ENCODE measurements at regions of chr16 and their contacts with region 1.

Region 1: GRCh38 chr16:48511071-48511540 is 98.9 kb downstream of the N4BP1 start:
- DNase-seq: peak; percentile 96
- H3K4me3 ChIP-seq: no peak overlapping the region
- H3K27ac ChIP-seq: peak overlapping the region; percentile 98
- H3K4me1 ChIP-seq: peaks cover 20% of the 10 kb centered on the region
- H3K27me3 ChIP-seq: no peaks in the 10 kb centered on the region
- CTCF ChIP-seq: peak; percentile 10 to 46

Region 2: GRCh38 chr16:48385272-48386150 is 125.6 kb before region 1 on chr16 and contains the start of gene SIAH1:
- CTCF ChIA-PET with region 1: no interaction called
- dilution Hi-C with region 1: no loop called
- in situ Hi-C with region 1: no loop called
- intact Hi-C with region 1: loop called (anchors 5 kb)
- DNase-seq: peak; percentile 77
- H3K4me3 ChIP-seq: peak within 1 kb of the TSS; percentile 90 to 95 (median 92)
- H3K27ac ChIP-seq: peak within 1 kb of the TSS; percentile 88
- H3K4me1 ChIP-seq: peaks cover 3% of the 10 kb centered on the region
- H3K27me3 ChIP-seq: no peaks in the 10 kb centered on the region
- CTCF ChIP-seq: no peak
- total RNA-seq, gene SIAH1: 22.3 to 46.0 TPM

Region 3: DNA sequence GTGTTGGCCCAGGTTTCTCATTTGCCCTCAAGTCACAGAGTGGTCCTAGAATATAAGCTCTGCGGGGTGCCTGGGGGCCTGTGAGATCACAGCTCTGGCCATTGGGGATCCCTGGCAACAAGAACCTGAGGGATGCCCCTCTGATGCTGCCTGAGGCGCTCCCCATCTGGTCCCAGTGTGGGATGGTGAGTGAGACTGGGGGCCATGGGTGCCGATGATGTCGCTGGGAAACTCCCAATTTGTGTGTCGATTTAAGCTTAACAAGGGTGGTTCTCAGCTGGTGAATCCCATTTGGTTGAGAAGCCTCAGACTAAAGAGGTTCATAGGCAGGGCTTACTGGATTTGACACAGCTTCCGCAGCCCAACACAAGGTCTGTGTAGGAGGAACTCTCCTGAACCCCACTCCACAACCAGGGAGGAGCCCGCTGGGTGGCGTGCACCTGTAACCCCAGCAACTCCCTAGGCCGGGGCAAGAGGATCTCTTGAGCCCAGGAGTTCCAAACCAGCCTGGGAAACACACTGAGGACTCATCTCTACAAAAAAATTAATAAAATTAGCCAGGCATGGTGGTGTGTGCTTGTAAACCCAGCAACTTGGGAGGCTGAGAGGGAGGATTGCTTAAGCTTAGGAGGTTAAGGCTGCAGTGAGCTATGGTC is 62.2 kb before region 1 on chr16:
- CTCF ChIA-PET with region 1: no interaction called
- dilution Hi-C with region 1: no loop called
- in situ Hi-C with region 1: no loop called
- intact Hi-C with region 1: no loop called
- DNase-seq: peak; percentile 16
- H3K4me3 ChIP-seq: no peak overlapping the region
- H3K27ac ChIP-seq: no peak overlapping the region
- H3K4me1 ChIP-seq: peaks cover 12% of the 10 kb centered on the region
- H3K27me3 ChIP-seq: no peaks in the 10 kb centered on the region
- CTCF ChIP-seq: no peak

Region 4: DNA sequence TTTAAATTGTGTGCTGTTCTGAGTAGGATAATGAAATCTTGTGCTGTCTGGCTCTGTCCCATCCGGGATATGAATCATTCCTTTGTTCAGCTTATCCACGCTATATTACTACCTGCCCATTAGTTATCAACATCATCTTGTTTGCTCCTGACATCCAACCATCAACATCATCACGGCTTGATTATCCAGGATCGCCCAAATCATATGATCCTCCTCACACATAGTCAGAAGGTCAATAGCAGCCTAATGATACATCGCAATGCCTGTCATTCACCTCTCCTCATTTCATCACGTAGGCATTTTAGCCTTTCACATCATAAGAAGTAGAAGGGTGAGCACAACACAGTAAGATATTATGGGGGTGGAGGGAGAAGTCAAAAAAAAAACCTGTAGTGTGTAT is 48.9 kb before region 1 on chr16:
- CTCF ChIA-PET with region 1: no interaction called
- dilution Hi-C with region 1: no loop called
- in situ Hi-C with region 1: no loop called
- intact Hi-C with region 1: loop called (anchors 5 kb)
- DNase-seq: peak; percentile 95
- H3K4me3 ChIP-seq: no peak overlapping the region
- H3K27ac ChIP-seq: peak overlapping the region; percentile 5
- H3K4me1 ChIP-seq: peaks cover 12% of the 10 kb centered on the region
- H3K27me3 ChIP-seq: no peaks in the 10 kb centered on the region
- CTCF ChIP-seq: no peak

Region 5: GRCh38 chr16:48479955-48480354 is 31.2 kb before region 1 on chr16:
- CTCF ChIA-PET with region 1: no interaction called
- dilution Hi-C with region 1: no loop called
- in situ Hi-C with region 1: no loop called
- intact Hi-C with region 1: no loop called
- DNase-seq: no peak
- H3K4me3 ChIP-seq: no peak overlapping the region
- H3K27ac ChIP-seq: no peak overlapping the region
- H3K4me1 ChIP-seq: no peaks in the 10 kb centered on the region
- H3K27me3 ChIP-seq: no peaks in the 10 kb centered on the region
- CTCF ChIP-seq: no peak

Measured in mammary epithelial cell (primary cell).